Heart left ventricle (tissue), 16 donors: ENCODE measurements at regions of chr20 and their contacts with region 1.

Region 1: GRCh38 chr20:25017257-25018115 is 24.9 kb upstream of the APMAP start:
- DNase-seq: peak in 3 of 5 donors; percentile 15 to 20 (median 20)
- ATAC-seq: no peak
- H3K4me3 ChIP-seq: no peak overlapping the region
- H3K27ac ChIP-seq: peak overlapping the region in 1 of 12 donors; percentile 18
- H3K4me1 ChIP-seq: peaks cover 0 to 35% (median 8%) of the 10 kb centered on the region in 12 donors
- H3K27me3 ChIP-seq: no peaks in the 10 kb centered on the region
- CTCF ChIP-seq: no peak
- POLR2A ChIP-seq: no peak

Region 2: GRCh38 chr20:24965065-24965929 is 52.2 kb before region 1 on chr20:
- intact Hi-C with region 1: loop called in 1 of 10 experiments (anchors 10 kb)
- DNase-seq: no peak
- ATAC-seq: peak in 1 of 4 donors; percentile 29
- H3K4me3 ChIP-seq: no peak overlapping the region
- H3K27ac ChIP-seq: no peak overlapping the region
- H3K4me1 ChIP-seq: peaks cover 0 to 4% (median 0%) of the 10 kb centered on the region in 12 donors
- H3K27me3 ChIP-seq: no peaks in the 10 kb centered on the region
- CTCF ChIP-seq: no peak
- POLR2A ChIP-seq: no peak

Region 3: GRCh38 chr20:25032478-25033280 is 15.2 kb after region 1 on chr20:
- intact Hi-C with region 1: loop called in 1 of 10 experiments (anchors 1 kb)
- DNase-seq: peak in 4 of 5 donors; percentile 64 to 76 (median 72)
- ATAC-seq: peak; percentile 43 to 86 (median 72)
- H3K4me3 ChIP-seq: peak overlapping the region in 7 of 12 donors; percentile 11 to 35 (median 16)
- H3K27ac ChIP-seq: peak overlapping the region; percentile 53 to 88 (median 76)
- H3K4me1 ChIP-seq: peaks cover 19 to 77% (median 65%) of the 10 kb centered on the region in 12 donors
- H3K27me3 ChIP-seq: no peaks in the 10 kb centered on the region
- CTCF ChIP-seq: peak in 3 of 12 donors; percentile 13 to 40 (median 29)
- POLR2A ChIP-seq: no peak

Region 4: DNA sequence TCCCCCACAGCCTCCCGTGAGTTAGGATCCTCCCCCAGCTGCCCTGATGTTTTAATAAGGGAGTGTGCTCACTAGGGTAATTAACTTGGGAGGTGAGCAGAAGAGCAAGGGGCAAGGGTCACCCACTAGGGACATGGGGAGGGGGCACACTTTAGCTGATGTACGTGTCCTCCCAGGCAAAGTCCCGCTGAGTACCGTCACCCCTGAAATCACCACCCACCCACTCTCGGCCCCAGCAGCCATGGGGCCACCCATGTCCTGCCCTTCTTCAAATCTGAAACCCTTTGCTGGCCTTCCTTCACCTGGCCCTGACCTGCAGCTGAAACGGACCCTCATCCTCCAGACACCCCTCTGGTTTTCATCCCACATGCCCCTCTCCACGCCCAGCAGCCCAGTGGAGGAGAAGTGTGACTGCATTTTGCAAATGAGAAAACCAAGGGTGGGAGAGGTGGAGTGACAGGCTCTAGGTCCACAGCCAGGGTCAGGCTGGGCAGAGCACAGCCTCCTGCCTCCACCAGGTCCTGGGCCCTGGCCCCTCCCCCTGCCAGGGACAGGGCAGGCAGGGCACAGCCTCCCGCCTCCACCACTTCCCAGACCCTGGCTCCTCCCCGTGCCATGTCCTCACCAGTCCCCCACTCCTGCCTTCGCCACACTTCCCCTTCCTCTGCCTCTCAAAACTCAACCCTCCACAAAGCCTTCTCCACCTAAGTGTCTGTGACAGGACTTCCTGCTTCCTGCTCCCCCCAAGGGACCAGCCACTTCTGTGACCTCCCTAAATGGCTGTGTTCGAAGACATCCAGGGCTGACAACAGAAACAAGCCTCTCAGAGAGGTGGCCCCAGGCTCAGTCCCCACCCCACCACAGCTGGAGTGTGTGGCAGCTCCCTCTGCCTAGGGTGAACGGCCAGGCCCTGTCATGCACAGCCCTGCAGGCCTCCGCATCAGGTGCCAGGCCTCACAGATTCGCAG is 25.3 kb after region 1 on chr20:
- intact Hi-C with region 1: no loop called
- DNase-seq: peak; percentile 78 to 88 (median 84)
- ATAC-seq: peak; percentile 15 to 67 (median 42)
- H3K4me3 ChIP-seq: no peak overlapping the region
- H3K27ac ChIP-seq: peak overlapping the region; percentile 63 to 96 (median 91)
- H3K4me1 ChIP-seq: peaks cover 19 to 99% (median 93%) of the 10 kb centered on the region in 12 donors
- H3K27me3 ChIP-seq: no peaks in the 10 kb centered on the region
- CTCF ChIP-seq: no peak
- POLR2A ChIP-seq: no peak

Region 5: GRCh38 chr20:25076731-25077609 is 59.5 kb after region 1 on chr20:
- intact Hi-C with region 1: no loop called
- DNase-seq: no peak
- ATAC-seq: peak in 3 of 4 donors; percentile 43 to 48 (median 45)
- H3K4me3 ChIP-seq: peak overlapping the region in 11 of 12 donors; percentile 5 to 47 (median 39)
- H3K27ac ChIP-seq: no peak overlapping the region
- H3K4me1 ChIP-seq: peaks cover 0 to 25% (median 13%) of the 10 kb centered on the region in 12 donors
- H3K27me3 ChIP-seq: peaks cover 14 to 79% (median 27%) of the 10 kb centered on the region in 9 donors
- CTCF ChIP-seq: peak in 6 of 12 donors; percentile 11 to 32 (median 20)
- POLR2A ChIP-seq: no peak

Region 6: GRCh38 chr20:25525295-25526266 is 508.1 kb after region 1 on chr20:
- intact Hi-C with region 1: no loop called
- DNase-seq: no peak
- ATAC-seq: peak in 1 of 4 donors; percentile 52
- H3K4me3 ChIP-seq: no peak overlapping the region
- H3K27ac ChIP-seq: no peak overlapping the region
- H3K4me1 ChIP-seq: no peaks in the 10 kb centered on the region
- H3K27me3 ChIP-seq: no peaks in the 10 kb centered on the region
- CTCF ChIP-seq: no peak
- POLR2A ChIP-seq: no peak